ENCODE measurements at regions of chr7 and their contacts with region 1.

Region 1: DNA sequence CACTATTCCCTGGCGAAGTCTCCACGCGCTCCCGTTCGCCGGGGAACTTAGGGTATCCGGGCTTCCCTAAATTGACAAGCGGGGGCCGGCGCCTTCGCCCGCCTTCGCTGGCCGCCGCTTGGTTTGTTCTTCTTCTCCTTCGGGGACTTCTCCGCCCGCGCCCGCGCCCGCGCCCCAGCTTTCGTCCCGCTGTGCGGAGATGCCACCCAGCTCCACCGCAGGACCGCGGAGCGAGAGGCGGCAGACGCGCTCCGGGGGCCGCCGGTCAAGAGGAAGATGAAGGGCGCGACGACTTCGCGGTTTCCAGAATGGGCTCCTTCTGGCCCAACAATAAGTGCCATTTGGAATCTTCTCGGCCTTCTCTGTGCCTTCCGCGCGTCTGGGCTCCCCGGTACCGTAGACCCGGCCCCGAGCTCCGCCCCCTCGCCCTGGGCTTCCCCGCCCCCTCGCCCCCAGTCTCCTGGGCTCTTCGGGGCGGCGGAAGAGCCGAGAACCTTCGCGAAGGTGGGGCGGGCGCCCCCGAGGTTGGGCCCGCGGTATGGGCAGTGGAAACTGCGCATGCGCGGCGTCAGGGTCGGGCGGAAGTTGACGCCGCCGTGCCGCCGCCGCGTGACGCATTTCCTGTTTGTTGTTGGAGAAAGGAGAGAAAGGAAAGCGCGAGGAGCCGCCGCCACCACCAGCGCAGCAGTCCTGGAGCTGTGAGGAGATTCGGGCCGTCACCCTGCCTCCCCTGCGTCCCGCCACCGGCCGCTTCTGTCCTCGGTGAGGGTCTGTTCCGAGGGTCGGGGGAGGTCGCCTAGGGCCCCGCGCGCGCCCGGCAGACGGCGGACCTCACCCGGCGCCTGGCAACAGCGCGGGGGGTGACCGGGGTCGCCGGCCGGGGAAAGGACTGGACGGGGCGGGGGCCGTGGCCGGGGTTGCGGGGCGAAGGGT is at the start of gene DNAJB6:
- DNase-seq: peak; percentile 95 to 98 (median 98)
- ATAC-seq: peak; percentile 92 to 93
- H3K4me3 ChIP-seq: peak within 1 kb of the TSS; percentile 95
- H3K27ac ChIP-seq: peak within 1 kb of the TSS; percentile 81
- H3K4me1 ChIP-seq: peaks cover 7% of the 10 kb centered on the region
- H3K27me3 ChIP-seq: no peaks in the 10 kb centered on the region
- total RNA-seq, gene DNAJB6: 154 to 183 (median 172) TPM

Region 2: DNA sequence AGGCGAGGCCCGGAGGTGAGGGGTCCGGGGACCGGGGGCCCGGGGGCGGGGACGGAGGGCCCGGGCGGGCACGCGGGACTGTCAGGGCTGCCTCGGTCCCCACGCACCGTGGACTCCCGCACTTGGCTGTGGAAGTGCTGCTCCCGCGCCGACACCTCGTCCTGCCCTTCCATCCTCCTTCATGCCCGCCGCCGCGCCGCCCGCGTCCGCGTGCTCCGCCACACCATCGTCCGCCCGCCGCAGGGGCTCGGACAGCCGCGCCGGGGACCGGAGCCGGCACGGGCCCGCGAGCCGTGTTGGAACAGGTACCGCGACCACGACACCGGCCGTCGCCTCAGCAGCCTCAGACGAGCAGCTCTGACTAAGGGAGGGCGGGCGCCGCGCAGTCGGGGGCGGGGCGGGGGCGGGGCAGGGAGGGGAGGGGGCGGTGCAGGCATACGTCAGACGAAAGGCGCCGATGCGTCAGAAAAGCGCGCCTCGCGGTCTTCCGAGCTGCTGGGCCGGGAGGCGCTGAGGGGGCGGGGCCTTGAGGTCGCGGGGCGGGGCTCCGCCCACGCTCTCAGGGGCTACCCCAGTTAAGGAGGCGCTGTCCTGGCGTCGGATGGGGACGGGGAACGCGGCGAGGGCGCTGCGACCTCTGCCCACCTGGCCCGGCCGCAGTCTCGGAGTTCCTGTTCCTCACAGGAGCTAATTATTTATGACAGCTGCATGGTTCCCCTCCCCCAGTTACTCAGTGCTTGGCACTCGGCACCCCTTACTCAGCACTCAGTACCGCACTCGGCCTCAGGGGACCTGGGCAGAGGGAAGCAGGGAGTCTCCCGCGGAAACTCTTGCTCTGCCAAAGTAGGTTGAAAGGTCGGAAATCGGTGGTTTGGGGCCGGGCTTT is 443.6 kb before region 1 on chr7 and contains the start of gene LMBR1:
- intact Hi-C with region 1: loop called in 1 of 4 experiments (anchors 5 kb)
- DNase-seq: peak; percentile 95 to 98 (median 98)
- ATAC-seq: peak; percentile 97 to 98
- H3K4me3 ChIP-seq: peak within 1 kb of the TSS; percentile 96
- H3K27ac ChIP-seq: peak within 1 kb of the TSS; percentile 99
- H3K4me1 ChIP-seq: no peaks in the 10 kb centered on the region
- H3K27me3 ChIP-seq: no peaks in the 10 kb centered on the region
- total RNA-seq, gene LMBR1: 45.3 to 48.7 (median 46.6) TPM

Region 3: DNA sequence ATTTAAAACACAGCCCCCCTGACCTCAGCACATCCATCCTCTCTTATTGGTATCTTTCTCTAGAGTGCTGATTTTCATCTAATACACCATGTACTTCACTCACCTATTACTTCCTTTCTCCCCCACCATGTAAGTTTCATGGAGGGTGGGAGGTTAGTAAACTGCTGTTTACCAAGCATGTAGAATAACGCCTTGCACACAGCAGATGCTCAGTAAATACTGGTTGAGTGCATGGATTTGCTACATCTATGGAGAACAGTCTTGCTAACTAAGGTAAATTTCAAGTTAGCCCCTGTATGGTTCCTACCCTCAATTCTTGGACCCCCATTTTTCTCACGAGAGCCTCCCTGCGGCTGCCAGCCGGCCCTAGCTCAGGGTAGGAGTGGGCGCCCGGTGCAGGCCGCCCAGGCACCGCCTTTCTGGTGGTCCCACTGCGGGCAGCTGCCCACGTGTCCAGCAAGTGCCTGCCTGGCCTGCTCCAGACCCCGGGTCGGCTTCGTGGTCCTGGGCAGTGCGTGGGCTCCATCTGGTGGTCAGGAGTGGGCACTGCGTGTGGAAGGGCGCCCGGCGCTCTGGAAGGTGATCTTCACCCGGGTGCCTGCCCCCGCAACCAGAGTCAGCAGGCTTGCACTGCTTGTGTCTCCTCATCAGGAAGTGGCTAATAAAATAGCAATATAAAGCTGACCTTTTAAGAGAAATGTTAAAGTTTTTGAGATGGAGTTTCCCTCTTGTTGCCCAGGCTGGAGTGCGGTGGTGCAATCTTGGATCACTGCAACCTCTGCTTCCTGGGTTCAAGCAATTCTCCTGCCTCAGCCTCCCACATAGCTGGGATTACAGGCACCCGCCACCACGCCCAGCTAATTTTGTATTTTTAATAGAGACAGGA is 63.2 kb before region 1 on chr7:
- intact Hi-C with region 1: loop called in 2 of 4 experiments (anchors 10 kb)
- DNase-seq: peak; percentile 67 to 89 (median 85)
- ATAC-seq: peak; percentile 70 to 72
- H3K4me3 ChIP-seq: no peak overlapping the region
- H3K27ac ChIP-seq: no peak overlapping the region
- H3K4me1 ChIP-seq: no peaks in the 10 kb centered on the region
- H3K27me3 ChIP-seq: no peaks in the 10 kb centered on the region

Region 4: DNA sequence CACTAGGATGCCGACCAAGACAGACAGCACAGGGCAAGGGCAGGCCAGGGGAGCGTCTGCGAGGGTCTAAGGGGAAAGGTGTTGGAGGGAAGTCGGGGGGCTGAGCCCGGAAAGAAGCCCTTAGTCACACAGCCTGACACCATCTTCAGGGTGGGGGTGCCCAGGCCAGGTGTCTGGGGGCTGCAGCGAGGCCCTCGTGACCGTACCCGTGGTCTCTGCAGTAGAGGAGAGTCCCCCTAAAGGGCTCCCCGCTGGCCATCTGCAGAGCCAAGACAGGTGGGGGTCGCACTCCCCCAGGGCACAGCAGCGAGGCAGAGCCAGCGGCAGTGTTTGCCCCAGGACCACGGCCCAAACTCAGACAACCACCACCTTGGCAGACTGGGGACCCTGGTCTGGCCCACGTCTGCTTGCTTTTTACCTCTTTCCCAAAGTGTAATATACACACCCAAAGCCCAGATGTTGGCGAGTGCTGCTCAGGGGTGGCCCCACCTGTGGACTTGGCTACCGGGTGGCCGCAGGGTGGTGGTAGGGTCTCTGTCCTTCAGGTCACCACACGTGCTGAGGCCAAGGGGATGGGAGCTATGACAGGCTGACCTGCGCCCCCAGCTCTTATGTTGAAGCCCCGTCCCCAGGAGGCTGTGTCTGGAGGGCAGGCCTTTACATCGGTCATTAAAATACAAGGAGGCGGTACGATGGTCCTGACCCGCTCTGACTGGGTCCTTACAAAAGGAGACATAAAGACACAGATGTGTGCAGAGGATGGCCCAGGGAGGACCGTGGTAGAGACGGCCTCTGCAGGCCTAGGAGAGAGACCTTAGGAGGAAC is 107.6 kb after region 1 on chr7:
- intact Hi-C with region 1: no loop called
- DNase-seq: no peak
- ATAC-seq: peak in 1 of 2 donors; percentile 28
- H3K4me3 ChIP-seq: no peak overlapping the region
- H3K27ac ChIP-seq: no peak overlapping the region
- H3K4me1 ChIP-seq: no peaks in the 10 kb centered on the region
- H3K27me3 ChIP-seq: no peaks in the 10 kb centered on the region

Region 5: GRCh38 chr7:157502701-157503111 is 166.1 kb after region 1 on chr7:
- intact Hi-C with region 1: no loop called
- DNase-seq: peak in 1 of 3 donors; percentile 40
- ATAC-seq: peak; percentile 60 to 92
- H3K4me3 ChIP-seq: no peak overlapping the region
- H3K27ac ChIP-seq: no peak overlapping the region
- H3K4me1 ChIP-seq: no peaks in the 10 kb centered on the region
- H3K27me3 ChIP-seq: no peaks in the 10 kb centered on the region